PC-3 (cell line): ENCODE measurements at regions of chr13 and their contacts with region 1.

Region 1: DNA sequence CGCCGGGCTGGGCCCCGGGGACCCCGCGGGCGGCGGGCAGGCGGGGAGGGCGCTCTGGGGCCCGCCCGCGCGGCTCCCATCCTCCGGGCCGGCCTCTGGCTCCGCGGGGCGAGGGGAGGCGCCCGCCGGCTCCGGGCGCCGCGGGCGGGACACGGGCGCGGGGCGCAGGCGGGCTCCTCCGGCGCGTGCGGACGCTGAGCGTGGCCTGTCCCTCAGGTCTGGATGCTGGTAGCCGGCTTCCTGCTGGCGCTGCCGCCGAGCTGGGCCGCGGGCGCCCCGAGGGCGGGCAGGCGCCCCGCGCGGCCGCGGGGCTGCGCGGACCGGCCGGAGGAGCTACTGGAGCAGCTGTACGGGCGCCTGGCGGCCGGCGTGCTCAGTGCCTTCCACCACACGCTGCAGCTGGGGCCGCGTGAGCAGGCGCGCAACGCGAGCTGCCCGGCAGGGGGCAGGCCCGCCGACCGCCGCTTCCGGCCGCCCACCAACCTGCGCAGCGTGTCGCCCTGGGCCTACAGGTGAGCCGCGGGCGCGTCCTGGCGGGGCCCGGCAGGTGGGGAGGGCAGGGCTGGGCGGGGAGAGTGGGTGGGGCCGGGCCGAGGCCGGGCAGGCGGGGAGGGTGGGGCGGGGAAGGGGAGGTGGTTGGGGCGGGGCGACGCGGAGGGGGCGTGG is 414 bp downstream of the IL17D start:
- DNase-seq: peak; percentile 94
- ATAC-seq: peak; percentile 84
- H3K4me3 ChIP-seq: peak overlapping the region; percentile 40; the same call in 1 of the 2 replicates
- H3K27ac ChIP-seq: no peak overlapping the region
- H3K4me1 ChIP-seq: peaks cover 25% of the 10 kb centered on the region
- H3K27me3 ChIP-seq: no peaks in the 10 kb centered on the region
- CTCF ChIP-seq: peak; percentile 26; the same call in 1 of the 2 replicates

Region 2: GRCh38 chr13:20616059-20616797 is 87.7 kb before region 1 on chr13:
- CTCF ChIA-PET with region 1: no interaction called
- POLR2A ChIA-PET with region 1: no interaction called
- intact Hi-C with region 1: loop called (anchors 5 kb)
- DNase-seq: peak; percentile 90
- ATAC-seq: peak; percentile 100
- H3K4me3 ChIP-seq: no peak overlapping the region
- H3K27ac ChIP-seq: peak overlapping the region; percentile 48
- H3K4me1 ChIP-seq: peaks cover 14% of the 10 kb centered on the region
- H3K27me3 ChIP-seq: no peaks in the 10 kb centered on the region
- CTCF ChIP-seq: no peak

Region 3: GRCh38 chr13:20749377-20749776 is 45.5 kb after region 1 on chr13:
- CTCF ChIA-PET with region 1: no interaction called
- POLR2A ChIA-PET with region 1: no interaction called
- intact Hi-C with region 1: no loop called
- DNase-seq: no peak
- ATAC-seq: no peak
- H3K4me3 ChIP-seq: no peak overlapping the region
- H3K27ac ChIP-seq: no peak overlapping the region
- H3K4me1 ChIP-seq: no peaks in the 10 kb centered on the region
- H3K27me3 ChIP-seq: no peaks in the 10 kb centered on the region
- CTCF ChIP-seq: no peak